Activated naive CD4-positive, alpha-beta T cell treated with anti-CD3 and anti-CD28 coated beads for 36 hours (primary cell): ENCODE measurements at regions of chr5 and their contacts with region 1.

Region 1: GRCh38 chr5:9207817-9208418 is 338.0 kb downstream of the SEMA5A start:
- DNase-seq: no peak
- H3K4me3 Mint-ChIP-seq: no peak overlapping the region
- H3K27ac Mint-ChIP-seq: no peak overlapping the region
- H3K4me1 Mint-ChIP-seq: no peaks in the 10 kb centered on the region
- H3K27me3 Mint-ChIP-seq: no peaks in the 10 kb centered on the region

Region 2: GRCh38 chr5:7927466-7928375 is 1280.2 kb before region 1 on chr5:
- CTCF ChIA-PET with region 1: interaction called, 4 read pairs
- intact Hi-C with region 1: loop called (anchors 1 kb)
- DNase-seq: peak; percentile 65
- H3K4me3 Mint-ChIP-seq: no peak overlapping the region
- H3K27ac Mint-ChIP-seq: no peak overlapping the region
- H3K4me1 Mint-ChIP-seq: peaks cover 4% of the 10 kb centered on the region
- H3K27me3 Mint-ChIP-seq: peaks cover 7% of the 10 kb centered on the region